GM10248 (cell line): ENCODE measurements at regions of chr1 and their contacts with region 1.

Region 1: GRCh38 chr1:90721210-90722194 is 4.4 kb upstream of the BARHL2 start:
- DNase-seq: peak; percentile 67
- CTCF ChIP-seq: peak; percentile 80

Region 2: GRCh38 chr1:90710579-90711536 is 10.6 kb before region 1 on chr1:
- CTCF ChIA-PET with region 1: interaction called, 15 read pairs
- POLR2A ChIA-PET with region 1: no interaction called
- DNase-seq: no peak
- CTCF ChIP-seq: no peak

Region 3: GRCh38 chr1:90746857-90747256 is 25.4 kb after region 1 on chr1:
- CTCF ChIA-PET with region 1: interaction called, 18 read pairs
- POLR2A ChIA-PET with region 1: no interaction called
- DNase-seq: no peak
- CTCF ChIP-seq: no peak